CD8-positive, alpha-beta memory T cell (primary cell): ENCODE measurements at regions of chr12 and their contacts with region 1.

Region 1: DNA sequence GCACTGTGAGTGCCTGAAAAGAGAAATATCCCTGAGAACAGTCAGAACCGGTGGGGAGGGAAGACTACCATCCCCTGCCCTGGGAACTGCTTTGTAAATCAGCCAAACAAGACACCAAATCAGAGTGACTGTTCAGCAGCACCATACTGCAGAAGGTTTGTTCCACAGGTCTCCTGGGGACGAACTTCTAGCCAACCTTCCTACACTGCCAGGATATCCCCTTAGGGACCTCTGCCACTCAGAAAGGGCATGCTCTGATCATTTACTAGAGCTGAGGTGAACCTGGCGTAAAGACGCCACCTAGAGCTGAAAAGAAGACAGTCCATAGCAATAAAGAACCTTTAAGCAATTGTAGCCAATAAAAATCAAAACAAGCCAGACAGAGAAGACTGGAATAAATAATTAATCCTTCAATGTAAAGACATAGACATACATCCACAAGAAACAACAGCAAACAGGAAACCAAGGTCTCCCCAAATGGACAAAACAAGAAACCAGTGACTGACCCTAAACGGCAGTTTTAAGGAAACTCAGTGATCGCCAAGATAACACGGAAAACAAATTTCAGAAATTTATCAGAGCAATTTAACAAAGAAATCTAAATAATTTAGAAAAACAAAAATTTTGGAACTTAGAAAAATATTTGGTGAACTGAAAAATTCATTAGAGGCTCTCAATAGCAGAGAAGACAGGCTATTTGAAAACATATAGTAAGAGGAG is 228.1 kb upstream of the AMIGO2 start:
- DNase-seq: peak in 3 of 5 donors; percentile 56 to 72 (median 57)
- H3K4me3 ChIP-seq: peak overlapping the region; percentile 67
- H3K4me3 Mint-ChIP-seq: peak overlapping the region; percentile 29 to 92 (median 86)
- H3K27ac ChIP-seq: no peak overlapping the region
- H3K27ac Mint-ChIP-seq: peak overlapping the region; percentile 62 to 93 (median 90)
- H3K4me1 ChIP-seq: peaks cover 14% of the 10 kb centered on the region
- H3K4me1 Mint-ChIP-seq: peaks cover 36 to 48% (median 41%) of the 10 kb centered on the region in 3 donors
- H3K27me3 ChIP-seq: no peaks in the 10 kb centered on the region
- H3K27me3 Mint-ChIP-seq: no peaks in the 10 kb centered on the region

Region 2: DNA sequence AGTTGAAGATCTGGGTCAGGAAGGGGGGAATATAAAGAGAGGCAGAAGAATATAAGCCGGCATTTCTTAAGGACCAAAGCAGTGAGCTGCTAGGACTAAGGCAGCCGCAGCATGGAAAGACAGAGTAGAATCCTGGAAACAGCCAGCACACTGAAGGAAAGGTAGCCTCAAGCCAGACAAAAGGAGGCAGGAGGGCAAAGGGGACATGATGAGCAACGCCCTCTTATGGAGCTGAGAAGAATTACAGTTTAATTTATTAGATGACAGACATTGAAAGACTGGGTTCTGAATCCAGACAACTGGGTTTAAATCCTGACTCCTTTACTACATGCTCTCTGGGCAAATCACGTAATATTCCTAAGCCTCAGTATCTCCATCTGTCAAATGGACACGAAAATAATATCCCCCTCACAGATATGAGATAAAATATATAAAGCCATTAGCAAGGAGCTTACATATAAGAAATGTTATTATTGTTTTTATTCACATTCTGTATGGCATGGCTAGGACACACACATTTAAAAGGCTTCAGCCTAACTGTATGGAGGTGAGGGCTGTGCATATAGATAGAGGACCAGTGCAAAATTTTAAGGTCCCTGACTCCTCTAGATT is 236.5 kb before region 1 on chr12:
- CTCF ChIA-PET with region 1: interaction called, 10 read pairs
- POLR2A ChIA-PET with region 1: no interaction called
- DNase-seq: peak in 1 of 5 donors; percentile 31
- H3K4me3 ChIP-seq: no peak overlapping the region
- H3K4me3 Mint-ChIP-seq: no peak overlapping the region
- H3K27ac ChIP-seq: no peak overlapping the region
- H3K27ac Mint-ChIP-seq: peak overlapping the region in 1 of 8 donors; percentile 53
- H3K4me1 ChIP-seq: peaks cover under 1% of the 10 kb centered on the region
- H3K4me1 Mint-ChIP-seq: peaks cover 5 to 10% (median 10%) of the 10 kb centered on the region in 3 donors
- H3K27me3 ChIP-seq: no peaks in the 10 kb centered on the region
- H3K27me3 Mint-ChIP-seq: no peaks in the 10 kb centered on the region